Mammary epithelial cell (primary cell): ENCODE measurements at regions of chr2 and their contacts with region 1.

Region 1: GRCh38 chr2:25756536-25756935 is 83.2 kb upstream of the DTNB start:
- DNase-seq: no peak
- H3K4me3 ChIP-seq: no peak overlapping the region
- H3K27ac ChIP-seq: no peak overlapping the region
- H3K4me1 ChIP-seq: no peaks in the 10 kb centered on the region
- H3K27me3 ChIP-seq: no peaks in the 10 kb centered on the region
- CTCF ChIP-seq: no peak

Region 2: DNA sequence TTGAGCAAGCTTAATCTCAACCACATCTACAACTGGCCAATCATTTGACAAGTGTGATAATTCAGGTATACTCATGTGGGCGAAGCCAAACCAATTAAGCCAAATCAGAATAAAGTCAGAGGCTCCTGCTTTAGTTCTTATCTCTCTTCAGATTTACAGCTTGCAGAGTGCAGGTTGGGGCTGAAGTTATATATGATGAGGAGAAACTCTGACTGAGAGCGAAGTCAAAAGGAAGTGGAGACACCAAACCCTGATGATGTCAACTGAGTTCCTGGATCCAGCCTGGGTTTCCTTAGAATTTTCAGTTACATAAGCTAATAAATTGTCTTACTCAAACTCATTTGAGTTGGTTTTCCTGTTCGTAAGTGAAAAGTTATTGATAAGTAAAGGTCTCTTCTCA is 47.8 kb after region 1 on chr2:
- CTCF ChIA-PET with region 1: no interaction called
- dilution Hi-C with region 1: loop called (anchors 5 kb)
- in situ Hi-C with region 1: no loop called
- intact Hi-C with region 1: no loop called
- DNase-seq: no peak
- H3K4me3 ChIP-seq: no peak overlapping the region
- H3K27ac ChIP-seq: no peak overlapping the region
- H3K4me1 ChIP-seq: peaks cover 10% of the 10 kb centered on the region
- H3K27me3 ChIP-seq: no peaks in the 10 kb centered on the region
- CTCF ChIP-seq: no peak

Region 3: DNA sequence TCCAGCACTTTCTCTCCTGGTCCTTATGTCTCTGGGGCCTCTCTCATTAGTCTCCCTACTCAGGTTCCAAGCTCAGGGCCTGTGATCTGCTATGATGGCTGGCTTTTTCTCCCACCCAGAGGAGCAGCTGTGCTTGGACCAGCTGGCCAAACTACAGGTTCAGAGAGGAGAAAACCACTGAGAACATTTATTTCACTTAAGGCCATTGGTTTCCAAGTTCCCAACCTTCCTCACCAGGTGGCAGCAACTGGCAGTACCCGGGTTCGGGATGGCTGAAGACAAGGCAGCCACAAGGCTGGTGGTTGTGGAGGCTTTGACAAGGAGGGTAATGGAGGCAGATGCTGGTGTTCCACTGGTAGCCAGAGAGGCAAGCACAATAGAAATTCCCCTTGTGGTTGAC is 559.5 kb after region 1 on chr2:
- CTCF ChIA-PET with region 1: no interaction called
- dilution Hi-C with region 1: no loop called
- in situ Hi-C with region 1: no loop called
- intact Hi-C with region 1: no loop called
- DNase-seq: no peak
- H3K4me3 ChIP-seq: no peak overlapping the region
- H3K27ac ChIP-seq: no peak overlapping the region
- H3K4me1 ChIP-seq: peaks cover 10% of the 10 kb centered on the region
- H3K27me3 ChIP-seq: no peaks in the 10 kb centered on the region
- CTCF ChIP-seq: peak; percentile 5 to 33